K562 (cell line): ENCODE measurements at regions of chr9 and their contacts with region 1.

Region 1: DNA sequence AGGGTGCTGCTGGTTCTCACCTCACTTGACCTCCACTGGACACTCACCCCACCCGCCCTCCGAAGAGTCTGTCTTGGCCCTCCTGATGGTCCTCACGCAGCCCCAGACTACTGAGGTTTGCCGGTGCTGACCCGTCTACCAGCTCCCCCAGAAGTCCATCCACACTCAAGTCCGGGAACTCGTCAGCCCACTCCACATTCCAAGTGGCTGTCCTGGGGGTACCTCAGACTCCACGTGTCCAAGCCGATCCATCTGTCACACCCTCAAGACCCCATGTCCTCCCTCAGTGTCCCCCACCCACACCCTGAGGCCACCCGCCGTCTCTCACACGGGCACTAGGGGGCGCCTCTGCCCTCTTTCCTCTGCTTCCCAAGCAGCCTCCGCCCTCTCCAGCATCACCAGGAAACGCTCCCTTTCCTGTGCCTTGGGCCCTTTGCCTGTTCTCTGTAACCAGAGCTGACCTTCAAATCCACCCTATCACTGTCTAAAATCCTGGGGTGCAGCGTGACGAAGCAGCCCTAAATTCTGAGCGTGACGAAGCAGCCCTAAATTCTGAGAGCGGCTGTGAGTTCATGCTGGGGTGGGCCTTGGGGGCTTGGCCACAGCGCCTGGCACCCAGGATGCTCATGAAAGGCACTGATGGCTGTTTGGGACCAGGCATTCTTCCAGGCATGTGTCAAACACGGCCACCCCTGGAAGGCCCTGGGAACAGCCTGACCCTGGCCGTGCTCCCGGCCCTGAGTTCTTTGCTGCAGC is 95.7 kb downstream of the KCNT1 start:
- DNase-seq: peak; percentile 74 to 80 (median 79)
- ATAC-seq: peak; percentile 88
- H3K4me3 ChIP-seq: no peak overlapping the region
- H3K27ac ChIP-seq: no peak overlapping the region
- H3K4me1 ChIP-seq: peaks cover 3 to 32% of the 10 kb centered on the region in 2 experiments; a peak in 3 of 5 replicates
- H3K27me3 ChIP-seq: peaks cover 6 to 35% of the 10 kb centered on the region in 2 experiments; a peak in 4 of 5 replicates
- CTCF ChIP-seq: peak; percentile 75 to 93 (median 82)
- EP300 ChIP-seq: no peak
- POLR2A ChIP-seq: no peak
- RAD21 ChIP-seq: peak; percentile 29 to 73; a peak in 3 of 4 replicates

Region 2: GRCh38 chr9:135701959-135702721 is 95.5 kb before region 1 on chr9 and contains the start of gene KCNT1:
- CTCF ChIA-PET with region 1: no interaction called
- POLR2A ChIA-PET with region 1: no interaction called
- in situ Hi-C with region 1: no loop called
- intact Hi-C with region 1: loop called (anchors 10 kb)
- DNase-seq: peak; percentile 71 to 96 (median 94)
- ATAC-seq: peak; percentile 92
- H3K4me3 ChIP-seq: no peak within 1 kb of the TSS
- H3K27ac ChIP-seq: no peak within 1 kb of the TSS
- H3K4me1 ChIP-seq: peaks cover 0 to 55% of the 10 kb centered on the region in 2 experiments; a peak in 2 of 5 replicates
- H3K27me3 ChIP-seq: peaks cover 3 to 34% of the 10 kb centered on the region in 2 experiments; a peak in 4 of 5 replicates
- CTCF ChIP-seq: peak; percentile 83 to 91 (median 84)
- EP300 ChIP-seq: no peak
- POLR2A ChIP-seq: no peak
- RAD21 ChIP-seq: peak; percentile 46 to 76
- polyA plus RNA-seq, gene KCNT1: not detected

Region 3: GRCh38 chr9:135898634-135899407 is 101.1 kb after region 1 on chr9:
- CTCF ChIA-PET with region 1: no interaction called
- POLR2A ChIA-PET with region 1: no interaction called
- in situ Hi-C with region 1: no loop called
- intact Hi-C with region 1: no loop called
- DNase-seq: no peak
- ATAC-seq: no peak
- H3K4me3 ChIP-seq: no peak overlapping the region
- H3K27ac ChIP-seq: no peak overlapping the region
- H3K4me1 ChIP-seq: peaks cover 12 to 13% of the 10 kb centered on the region in 2 experiments; a peak in 4 of 5 replicates
- H3K27me3 ChIP-seq: no peaks in the 10 kb centered on the region
- CTCF ChIP-seq: no peak
- EP300 ChIP-seq: no peak
- POLR2A ChIP-seq: no peak
- RAD21 ChIP-seq: no peak

Region 4: GRCh38 chr9:135980926-135981630 is 183.4 kb after region 1 on chr9:
- CTCF ChIA-PET with region 1: interaction called, 4 read pairs
- POLR2A ChIA-PET with region 1: no interaction called
- in situ Hi-C with region 1: no loop called
- intact Hi-C with region 1: loop called (anchors 5 kb)
- DNase-seq: no peak
- ATAC-seq: no peak
- H3K4me3 ChIP-seq: no peak overlapping the region
- H3K27ac ChIP-seq: no peak overlapping the region
- H3K4me1 ChIP-seq: peaks cover 23 to 66% of the 10 kb centered on the region in 2 experiments
- H3K27me3 ChIP-seq: peaks cover 20 to 51% of the 10 kb centered on the region in 2 experiments; a peak in 4 of 5 replicates
- CTCF ChIP-seq: no peak
- EP300 ChIP-seq: no peak
- POLR2A ChIP-seq: no peak
- RAD21 ChIP-seq: no peak

Region 5: GRCh38 chr9:136275655-136276429 is 478.2 kb after region 1 on chr9:
- CTCF ChIA-PET with region 1: no interaction called
- POLR2A ChIA-PET with region 1: no interaction called
- in situ Hi-C with region 1: loop called (anchors 10 kb)
- intact Hi-C with region 1: no loop called
- DNase-seq: no peak
- ATAC-seq: peak; percentile 45
- H3K4me3 ChIP-seq: no peak overlapping the region
- H3K27ac ChIP-seq: no peak overlapping the region
- H3K4me1 ChIP-seq: peaks cover 0 to 27% of the 10 kb centered on the region in 2 experiments; a peak in 2 of 5 replicates
- H3K27me3 ChIP-seq: peaks cover 49 to 66% of the 10 kb centered on the region in 2 experiments
- CTCF ChIP-seq: peak in 1 of 3 experiments; percentile 6; a peak in 1 of 6 replicates
- EP300 ChIP-seq: no peak
- POLR2A ChIP-seq: no peak
- RAD21 ChIP-seq: no peak